ENCODE measurements at regions of chr16 and their contacts with region 1.

Region 1: DNA sequence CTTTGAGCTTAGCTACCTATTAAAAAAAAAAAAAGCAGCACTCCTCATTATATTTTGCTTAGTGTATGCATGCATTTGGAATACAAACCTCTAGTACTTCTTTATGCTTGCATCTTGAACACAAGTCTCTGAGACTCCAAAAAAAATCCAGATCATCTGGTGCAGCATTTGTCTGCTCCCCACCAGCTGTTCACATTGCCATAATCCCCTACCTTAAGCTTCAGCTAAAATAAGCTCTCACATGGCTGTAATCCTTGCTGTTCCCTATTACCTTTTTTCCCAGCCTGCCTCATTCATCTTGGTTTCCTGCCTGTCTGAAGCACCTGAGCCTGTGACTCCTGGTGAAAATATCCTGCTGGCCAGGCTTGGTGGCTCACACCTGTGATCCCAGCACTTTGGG is 7.5 kb upstream of the NFATC2IP start:
- DNase-seq: no peak
- CTCF ChIP-seq: no peak

Region 2: DNA sequence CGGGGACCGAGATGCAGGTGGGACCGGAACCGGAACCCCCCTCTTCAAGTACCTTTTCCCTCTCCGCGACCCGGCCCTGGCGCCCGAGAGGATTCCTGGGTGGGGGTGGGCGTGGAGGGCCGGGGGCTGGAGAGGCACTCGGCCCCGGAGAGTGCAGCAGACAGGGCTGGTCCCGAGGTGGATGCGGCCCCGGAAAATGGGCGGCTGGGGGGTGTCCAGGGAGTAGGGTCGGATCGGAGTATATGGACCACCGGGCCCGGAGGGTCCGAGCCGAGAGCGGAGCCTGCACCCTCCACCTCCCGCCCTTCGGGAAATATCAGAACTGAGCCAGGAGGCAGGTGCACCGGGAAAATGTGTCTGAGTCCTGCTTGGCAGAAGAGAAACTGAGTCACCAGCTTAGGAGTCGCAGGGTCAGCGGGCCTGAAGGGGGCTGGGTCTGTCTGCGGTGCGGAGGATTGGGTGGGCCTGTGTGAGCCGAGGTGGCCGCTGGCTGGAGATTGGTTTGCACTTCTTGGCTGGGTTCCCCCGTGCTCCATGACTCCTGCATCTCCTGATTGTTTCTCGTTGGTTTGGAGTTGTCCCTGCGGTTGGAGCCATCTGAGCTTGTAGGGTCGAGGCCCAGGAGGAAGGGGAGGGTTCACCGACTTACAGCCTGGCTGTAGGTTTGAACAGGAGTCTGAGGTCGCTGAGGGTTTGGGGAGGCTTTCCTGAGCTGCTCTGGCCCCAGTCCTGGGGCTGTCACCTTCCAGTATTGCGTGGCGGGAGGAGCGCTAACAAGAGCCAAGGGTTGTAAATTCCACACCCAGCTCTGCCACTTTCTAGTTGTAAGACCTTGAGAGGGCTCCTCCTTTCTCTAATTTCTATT is 79.1 kb before region 1 on chr16:
- CTCF ChIA-PET with region 1: interaction called, 65 read pairs
- POLR2A ChIA-PET with region 1: no interaction called
- DNase-seq: no peak
- CTCF ChIP-seq: no peak

Region 3: GRCh38 chr16:28873536-28874201 is 69.6 kb before region 1 on chr16:
- CTCF ChIA-PET with region 1: interaction called, 65 read pairs
- POLR2A ChIA-PET with region 1: no interaction called
- DNase-seq: peak; percentile 74
- CTCF ChIP-seq: peak; percentile 55

Region 4: GRCh38 chr16:28924732-28925385 is 18.4 kb before region 1 on chr16 and contains the start of gene RABEP2:
- CTCF ChIA-PET with region 1: interaction called, 139 read pairs
- POLR2A ChIA-PET with region 1: no interaction called
- DNase-seq: peak; percentile 99
- CTCF ChIP-seq: no peak